Gastrocnemius medialis (tissue), 4 donors: ENCODE measurements at regions of chr5 and their contacts with region 1.

Region 1: GRCh38 chr5:179623003-179623880 is at the start of gene HNRNPH1:
- DNase-seq: peak; percentile 97 to 99
- ATAC-seq: peak; percentile 87 to 89
- H3K4me3 ChIP-seq: peak within 1 kb of the TSS; percentile 85 to 100 (median 96)
- H3K27ac ChIP-seq: peak within 1 kb of the TSS; percentile 96 to 100 (median 100)
- H3K4me1 ChIP-seq: peaks cover 47 to 50% of the 10 kb centered on the region in 2 donors
- H3K27me3 ChIP-seq: no peaks in the 10 kb centered on the region
- CTCF ChIP-seq: peak in 3 of 5 experiments; percentile 16 to 27 (median 16)
- POLR2A ChIP-seq: peak; percentile 100
- total RNA-seq, gene HNRNPH1: 72.4 to 209 (median 157) TPM

Region 2: DNA sequence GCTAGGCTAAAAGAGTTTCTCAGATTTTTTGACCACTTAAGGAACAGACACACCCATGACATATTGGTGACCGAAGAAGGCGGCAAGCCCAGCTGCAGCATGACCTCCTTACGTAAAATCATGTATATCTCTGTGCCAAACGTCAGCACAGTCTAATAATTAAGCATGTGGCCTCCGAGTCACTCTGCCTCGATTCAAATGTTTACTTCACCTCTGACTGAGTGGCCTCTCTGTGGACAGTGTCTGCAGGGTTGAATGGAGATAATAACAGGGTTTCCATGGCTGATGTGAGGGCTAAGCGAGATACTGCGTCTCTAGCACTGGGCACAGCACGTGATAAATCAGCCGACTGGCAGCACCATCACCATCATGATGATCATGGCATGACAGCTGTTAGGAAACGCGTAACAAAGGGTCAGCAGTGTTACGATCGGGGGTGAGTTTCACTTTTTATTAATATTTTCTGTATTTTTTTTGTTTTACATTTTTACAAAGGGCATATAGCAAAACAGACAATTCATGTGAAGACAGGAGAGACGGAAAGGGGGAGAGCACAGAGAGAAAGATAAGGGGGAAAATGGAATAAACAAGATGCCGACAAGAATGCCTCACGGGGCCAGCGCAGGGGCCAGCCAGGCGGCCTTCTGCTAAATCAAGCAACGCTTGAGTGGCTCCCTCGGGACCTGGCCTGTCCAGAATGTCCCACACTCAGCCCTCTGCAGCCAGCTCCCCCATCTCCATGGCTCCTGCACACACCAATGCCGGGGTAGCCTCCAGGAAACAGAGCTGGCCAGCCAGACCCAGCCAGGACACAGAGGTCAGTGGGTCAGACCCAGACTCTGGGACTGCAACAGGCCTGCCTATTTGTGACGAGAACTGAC is 338.3 kb before region 1 on chr5:
- in situ Hi-C with region 1: no loop called
- intact Hi-C with region 1: loop called (anchors 10 kb)
- DNase-seq: peak; percentile 59 to 74
- ATAC-seq: peak; percentile 81 to 85
- H3K4me3 ChIP-seq: peak overlapping the region; percentile 11 to 45 (median 29)
- H3K27ac ChIP-seq: peak overlapping the region; percentile 50 to 82 (median 74)
- H3K4me1 ChIP-seq: peaks cover 30 to 35% of the 10 kb centered on the region in 2 donors
- H3K27me3 ChIP-seq: no peaks in the 10 kb centered on the region
- CTCF ChIP-seq: no peak
- POLR2A ChIP-seq: no peak

Region 3: GRCh38 chr5:179559284-179560252 is 63.7 kb before region 1 on chr5:
- in situ Hi-C with region 1: no loop called
- intact Hi-C with region 1: loop called (anchors 2 kb)
- DNase-seq: peak; percentile 95 to 98
- ATAC-seq: peak; percentile 100
- H3K4me3 ChIP-seq: peak overlapping the region; percentile 56 to 63 (median 58)
- H3K27ac ChIP-seq: peak overlapping the region; percentile 73 to 87 (median 79)
- H3K4me1 ChIP-seq: peaks cover 9 to 24% of the 10 kb centered on the region in 2 donors
- H3K27me3 ChIP-seq: no peaks in the 10 kb centered on the region
- CTCF ChIP-seq: no peak
- POLR2A ChIP-seq: peak; percentile 84 to 90

Region 4: DNA sequence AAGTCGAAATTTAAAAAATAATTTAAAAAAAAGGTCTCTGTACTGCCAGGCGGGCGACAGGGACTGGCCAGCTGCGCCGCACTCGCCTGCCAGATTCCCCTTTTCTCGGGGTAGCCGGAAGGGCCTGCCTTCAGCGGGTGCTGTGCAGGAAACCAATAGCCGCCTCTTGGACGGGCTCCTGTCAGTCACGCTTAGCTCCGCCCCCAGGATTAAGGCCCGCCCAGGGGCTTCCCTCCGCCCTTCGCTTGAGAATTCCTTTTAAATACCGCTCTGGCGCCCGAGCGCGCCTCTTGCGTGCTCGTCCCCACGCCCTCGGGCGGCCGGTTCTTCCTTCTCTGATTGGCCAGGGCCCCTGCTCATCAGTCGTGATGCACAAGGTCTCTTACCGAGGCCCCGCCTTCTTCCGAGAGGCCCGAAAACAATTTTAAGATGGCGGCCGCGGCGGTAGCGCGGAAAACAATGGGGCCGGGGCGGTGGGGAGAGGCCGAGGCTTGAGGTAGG is 109.2 kb after region 1 on chr5 and contains the start of gene MAML1:
- in situ Hi-C with region 1: no loop called
- intact Hi-C with region 1: loop called (anchors 2 kb)
- DNase-seq: peak; percentile 100
- ATAC-seq: peak; percentile 94 to 96
- H3K4me3 ChIP-seq: peak within 1 kb of the TSS; percentile 59 to 86 (median 72)
- H3K27ac ChIP-seq: peak within 1 kb of the TSS; percentile 79 to 97 (median 92)
- H3K4me1 ChIP-seq: peaks cover 37 to 40% of the 10 kb centered on the region in 2 donors
- H3K27me3 ChIP-seq: no peaks in the 10 kb centered on the region
- CTCF ChIP-seq: no peak
- POLR2A ChIP-seq: peak; percentile 63 to 77
- total RNA-seq, gene MAML1: 14.4 to 16.3 (median 15.1) TPM

Region 5: DNA sequence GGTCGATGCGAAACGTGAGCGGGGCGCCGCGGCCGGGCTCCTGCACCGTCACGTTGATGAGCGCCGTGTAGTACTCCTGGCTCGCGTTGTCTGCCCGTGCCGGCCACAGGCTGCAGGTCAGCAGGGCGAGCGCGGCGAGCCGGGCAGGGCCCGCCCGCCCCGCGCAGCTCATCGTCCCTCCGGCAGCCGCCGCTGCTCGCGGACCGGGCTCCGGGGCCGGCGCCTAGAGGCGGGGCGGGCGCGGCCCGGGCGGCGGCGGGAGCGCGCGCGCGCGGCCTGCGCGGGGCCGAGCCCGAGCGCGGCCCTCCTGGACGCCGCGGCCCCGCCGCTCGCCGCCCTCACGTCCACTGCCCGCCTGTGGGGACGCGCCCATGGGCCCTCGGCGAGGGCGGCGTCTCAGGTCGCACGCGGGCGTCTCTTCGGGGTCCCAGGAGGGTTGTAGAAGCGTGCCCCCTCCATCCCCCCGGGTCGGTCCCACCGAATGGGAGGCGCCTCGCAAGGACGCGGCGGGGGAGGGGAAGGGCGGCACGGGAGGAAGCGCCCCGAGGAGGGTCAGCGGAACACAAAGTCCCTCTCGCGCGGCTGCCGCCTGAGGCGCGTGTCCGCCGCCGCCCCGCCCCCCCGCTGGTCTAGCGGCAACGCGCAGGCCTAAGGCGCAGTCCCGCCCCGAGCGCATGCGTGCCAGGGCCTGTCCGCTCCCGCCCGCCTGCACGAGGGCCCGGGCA is 448.5 kb after region 1 on chr5 and contains the start of gene RNF130:
- in situ Hi-C with region 1: no loop called
- intact Hi-C with region 1: loop called (anchors 2 kb)
- DNase-seq: peak; percentile 89 to 92
- ATAC-seq: peak; percentile 85 to 87
- H3K4me3 ChIP-seq: peak within 1 kb of the TSS; percentile 75 to 98 (median 84)
- H3K27ac ChIP-seq: peak within 1 kb of the TSS; percentile 91 to 98 (median 98)
- H3K4me1 ChIP-seq: peaks cover 9 to 32% of the 10 kb centered on the region in 2 donors
- H3K27me3 ChIP-seq: no peaks in the 10 kb centered on the region
- CTCF ChIP-seq: no peak
- POLR2A ChIP-seq: peak; percentile 58 to 67
- total RNA-seq, gene RNF130: 34.5 to 79.5 (median 55.6) TPM